ENCODE measurements at regions of chr17 and their contacts with region 1.

Region 1: DNA sequence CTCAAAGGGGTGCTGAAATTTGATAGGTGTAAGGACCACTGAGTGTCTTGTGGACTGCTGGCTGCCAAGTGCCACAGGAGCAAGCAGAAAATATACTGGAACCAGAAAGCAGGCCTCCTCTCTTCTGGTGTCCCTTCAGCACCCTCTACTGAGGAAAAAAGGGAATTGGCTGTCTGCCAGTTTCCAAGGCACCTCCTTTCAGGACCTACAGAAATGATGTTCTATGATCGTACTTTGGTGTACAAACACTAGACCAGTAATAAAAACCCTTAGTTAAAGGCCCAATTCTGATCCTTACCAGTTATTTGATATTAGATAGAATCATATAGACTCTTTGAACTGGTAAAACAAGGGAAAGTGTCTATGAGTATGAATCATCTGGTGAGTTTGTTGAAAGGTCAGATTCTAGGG is 35.8 kb upstream of the BCAS3 start:
- DNase-seq: peak; percentile 44
- ATAC-seq: peak; percentile 76 to 78

Region 2: DNA sequence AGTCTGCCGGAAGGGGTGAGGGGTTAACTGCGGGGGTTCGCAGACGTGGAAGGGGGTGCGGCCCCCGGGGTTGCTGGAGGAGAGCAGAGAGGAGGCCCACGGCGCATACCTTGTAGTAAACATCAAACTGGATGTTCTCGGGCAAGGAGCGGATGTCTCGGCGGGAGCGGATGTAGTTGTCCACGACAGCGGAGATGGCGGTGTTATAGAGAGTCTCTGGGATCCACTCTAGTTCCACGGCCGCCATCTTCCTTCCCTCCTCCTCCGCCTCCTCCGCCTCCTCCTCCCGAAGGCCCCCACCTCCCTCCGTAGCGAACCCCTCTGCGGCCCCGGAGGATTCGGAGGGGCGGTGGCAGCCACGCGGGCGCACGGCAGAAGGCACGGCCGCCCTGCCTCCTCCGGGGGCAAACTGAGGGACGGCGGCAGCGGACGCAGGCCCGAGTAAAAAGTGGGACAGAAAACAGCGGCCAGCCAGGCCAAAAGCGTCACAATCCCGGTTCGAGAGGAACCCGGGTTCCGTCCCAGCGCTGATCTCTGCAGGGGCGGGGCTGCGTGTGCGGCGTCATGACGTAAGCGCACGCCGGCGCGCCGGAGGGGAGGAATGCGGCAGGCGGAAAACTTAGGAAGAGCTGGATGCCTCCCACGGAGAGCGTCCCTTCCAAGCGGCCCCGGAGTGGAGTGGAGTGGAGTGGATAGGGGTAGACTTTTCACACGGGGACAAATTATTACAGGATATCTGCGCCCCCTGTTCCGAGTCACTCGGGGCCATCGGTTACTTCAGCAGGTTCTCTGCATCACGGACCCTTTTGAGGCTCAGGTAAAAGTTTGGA is 115.9 kb before region 1 on chr17 and contains the start of gene APPBP2:
- intact Hi-C with region 1: loop called in 1 of 2 experiments (anchors 5 kb)
- DNase-seq: peak; percentile 90
- ATAC-seq: peak; percentile 98
- total RNA-seq, gene APPBP2: 23.4 to 26.5 TPM

Region 3: GRCh38 chr17:60577147-60577915 is 64.5 kb before region 1 on chr17:
- intact Hi-C with region 1: loop called (anchors 5 to 10 kb)
- DNase-seq: no peak
- ATAC-seq: peak; percentile 78 to 87

Region 4: DNA sequence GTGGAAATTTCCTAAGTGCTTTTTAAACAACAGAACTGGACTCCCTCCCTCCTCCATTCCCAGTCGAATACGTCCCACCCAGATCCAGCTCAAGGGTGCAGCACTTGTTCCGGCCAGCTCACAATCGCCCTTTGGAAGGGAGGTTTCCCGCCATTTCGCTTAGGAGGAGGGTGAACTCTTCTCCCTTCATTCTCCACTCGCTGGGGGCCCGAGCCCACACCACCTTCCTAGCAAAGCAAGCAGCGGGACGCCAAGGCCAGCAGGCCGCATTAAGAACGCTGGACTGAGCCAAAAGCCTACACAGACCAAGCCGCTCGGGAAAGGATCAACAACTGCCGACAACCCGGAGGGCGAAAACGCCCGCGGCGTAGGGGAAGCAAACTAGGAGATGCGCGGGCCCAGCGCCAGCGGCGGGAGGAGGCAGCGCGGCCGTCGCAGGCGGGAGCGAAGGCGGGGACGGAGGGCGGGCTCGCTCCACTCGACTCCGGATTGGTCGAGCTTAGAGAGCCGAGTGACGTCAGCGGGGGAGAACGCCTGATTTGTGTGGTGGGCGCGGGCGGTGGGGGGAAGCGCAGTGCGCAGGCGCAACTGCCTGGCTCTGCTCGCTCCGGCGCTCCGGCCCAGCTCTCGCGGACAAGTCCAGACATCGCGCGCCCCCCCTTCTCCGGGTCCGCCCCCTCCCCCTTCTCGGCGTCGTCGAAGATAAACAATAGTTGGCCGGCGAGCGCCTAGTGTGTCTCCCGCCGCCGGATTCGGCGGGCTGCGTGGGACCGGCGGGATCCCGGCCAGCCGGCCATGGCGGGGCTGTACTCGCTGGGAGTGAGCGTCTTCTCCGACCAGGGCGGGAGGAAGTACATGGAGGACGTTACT is 42.0 kb before region 1 on chr17 and contains the start of gene PPM1D:
- intact Hi-C with region 1: loop called in 1 of 2 experiments (anchors 5 kb)
- DNase-seq: peak; percentile 100
- ATAC-seq: peak; percentile 98
- total RNA-seq, gene PPM1D: 9.0 to 10.2 TPM